ENCODE measurements at regions of chr9 and their contacts with region 1.

Region 1: GRCh38 chr9:130780865-130781504 is 54.1 kb upstream of the ABL1 start:
- DNase-seq: no peak

Region 2: DNA sequence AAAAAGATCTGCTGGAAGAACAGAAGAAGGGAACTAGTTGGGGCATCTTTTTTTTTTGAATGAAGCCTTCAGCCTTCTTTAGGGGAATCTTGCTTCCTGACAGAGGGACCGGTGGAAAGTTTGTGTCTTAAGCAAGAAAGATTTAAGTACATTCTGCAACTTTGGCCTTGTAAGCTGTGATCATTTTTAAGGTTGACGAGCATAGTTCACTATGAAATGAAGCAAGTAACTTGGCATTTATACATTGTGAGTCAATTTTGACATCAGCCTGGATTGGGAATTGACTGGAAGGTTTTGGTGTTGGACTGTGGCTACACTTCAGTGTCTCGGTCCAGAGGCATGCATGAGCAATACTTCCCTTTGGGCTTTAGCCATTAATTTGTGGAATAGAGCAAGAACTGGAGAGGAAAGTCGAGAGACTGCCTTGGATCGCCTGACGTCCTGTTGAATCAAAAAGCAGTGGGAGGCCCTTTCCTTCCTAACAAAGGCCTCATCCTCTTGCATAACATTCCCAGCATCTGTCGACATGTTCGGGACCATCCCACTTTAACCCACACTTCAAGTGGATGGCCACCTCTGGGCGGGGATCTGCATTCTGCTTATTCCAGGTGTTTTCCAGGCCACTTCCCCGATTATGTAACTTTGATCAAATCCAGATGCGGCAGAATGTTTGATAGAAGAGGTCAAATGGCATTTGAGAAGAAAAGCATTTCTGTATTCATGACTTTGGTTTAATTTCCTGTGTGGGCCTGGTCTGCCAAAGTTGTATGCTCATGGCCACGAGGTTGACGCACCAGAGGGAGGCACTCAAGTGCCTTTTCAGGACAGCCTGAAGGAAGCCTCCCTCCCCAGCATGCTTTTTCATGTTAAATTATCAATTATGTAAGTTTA is 66.6 kb after region 1 on chr9:
- intact Hi-C with region 1: loop called (anchors 1 kb)
- DNase-seq: peak; percentile 81

Measured in cardiac septum (tissue), 1 donor.